ENCODE measurements at regions of chr1 and their contacts with region 1.

Region 1: GRCh38 chr1:108963052-108963686 is at the start of gene CLCC1:
- DNase-seq: peak; percentile 86 to 97 (median 95)

Region 2: GRCh38 chr1:109034382-109034781 is 71.2 kb after region 1 on chr1:
- intact Hi-C with region 1: loop called (anchors 10 kb)
- DNase-seq: peak in 1 of 42 donors; percentile 36

Region 3: DNA sequence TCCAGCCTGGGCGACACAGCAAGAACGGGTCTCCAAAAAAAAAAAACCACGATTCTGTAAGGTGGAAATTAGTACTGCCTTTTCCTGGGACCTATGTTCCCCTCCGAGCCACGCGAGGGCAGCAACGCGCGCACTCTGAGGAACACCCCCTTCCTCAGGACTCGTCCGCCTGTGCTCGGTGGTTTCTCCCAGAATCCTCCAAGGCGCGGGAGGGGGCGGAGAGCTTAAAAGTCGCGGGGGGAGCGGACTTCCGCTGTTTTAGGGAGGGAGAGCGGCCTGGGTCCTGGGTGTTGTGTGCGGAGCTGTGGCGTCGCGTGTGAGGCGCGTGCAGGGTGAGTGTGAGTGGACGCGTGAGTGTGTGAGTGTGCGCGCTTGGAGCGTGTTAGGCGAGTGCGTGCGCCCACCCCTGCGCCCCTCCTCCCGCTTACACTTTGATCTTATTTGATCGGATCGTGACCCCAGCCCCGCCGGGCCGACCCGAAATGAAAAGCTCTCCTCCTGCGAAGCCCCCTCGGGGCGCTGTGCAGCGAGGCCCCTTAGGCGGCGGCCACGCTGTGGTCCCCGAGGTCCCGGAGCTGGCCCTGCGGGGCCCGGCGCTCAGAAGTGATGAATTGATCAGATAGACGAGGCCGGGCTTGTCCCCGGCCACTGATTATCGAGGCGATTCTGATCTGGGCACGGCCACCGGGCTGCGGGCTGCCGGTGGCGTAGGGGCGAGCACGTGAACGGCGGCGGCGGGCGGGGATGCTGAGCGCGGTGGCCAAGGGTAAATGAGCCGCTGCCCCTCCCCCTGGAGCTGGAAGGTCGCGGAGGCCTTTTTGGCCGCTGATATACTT is 137.0 kb after region 1 on chr1:
- intact Hi-C with region 1: loop called (anchors 10 kb)
- DNase-seq: peak; percentile 92 to 99 (median 97)

Measured in head of caudate nucleus (tissue), 42 donors.